Heart right ventricle (tissue), 16 donors: ENCODE measurements at regions of chr21 and their contacts with region 1.

Region 1: GRCh38 chr21:16323596-16323995 is 593.8 kb downstream of the USP25 start:
- DNase-seq: no peak
- ATAC-seq: no peak
- H3K4me3 ChIP-seq: no peak overlapping the region
- H3K27ac ChIP-seq: no peak overlapping the region
- H3K4me1 ChIP-seq: peaks cover 0 to 11% (median 0%) of the 10 kb centered on the region in 9 donors
- H3K27me3 ChIP-seq: no peaks in the 10 kb centered on the region
- CTCF ChIP-seq: no peak

Region 2: DNA sequence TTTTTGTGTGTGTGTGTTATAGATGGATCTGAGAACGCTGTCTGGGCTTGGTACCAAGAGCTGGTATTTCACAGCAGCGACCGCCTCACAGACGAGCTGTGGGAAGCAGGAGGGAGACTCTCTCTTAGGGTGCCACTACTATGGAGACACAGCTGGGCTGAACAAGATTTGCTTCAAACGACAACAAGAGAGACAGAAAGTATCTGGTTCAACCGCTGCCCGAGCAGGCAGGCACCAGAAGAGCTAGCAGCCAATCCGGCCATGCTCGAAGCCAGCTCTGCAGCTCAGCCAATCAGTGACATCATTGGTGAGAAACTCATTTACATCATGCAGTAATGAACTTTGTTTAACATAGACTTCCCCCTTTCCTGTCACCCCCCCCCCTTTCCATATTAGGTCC is 252.5 kb before region 1 on chr21:
- intact Hi-C with region 1: loop called in 1 of 10 experiments (anchors 1 kb)
- DNase-seq: no peak
- ATAC-seq: no peak
- H3K4me3 ChIP-seq: peak overlapping the region in 1 of 10 donors; percentile 5
- H3K27ac ChIP-seq: no peak overlapping the region
- H3K4me1 ChIP-seq: no peaks in the 10 kb centered on the region
- H3K27me3 ChIP-seq: no peaks in the 10 kb centered on the region
- CTCF ChIP-seq: no peak

Region 3: GRCh38 chr21:16082038-16082816 is 241.4 kb before region 1 on chr21:
- intact Hi-C with region 1: loop called in 4 of 10 experiments (anchors 2 to 5 kb)
- DNase-seq: no peak
- ATAC-seq: peak in 2 of 8 donors; percentile 33 to 38
- H3K4me3 ChIP-seq: peak overlapping the region in 5 of 10 donors; percentile 17 to 35 (median 33)
- H3K27ac ChIP-seq: peak overlapping the region in 1 of 10 donors; percentile 23
- H3K4me1 ChIP-seq: peaks cover 0 to 14% (median 4%) of the 10 kb centered on the region in 9 donors
- H3K27me3 ChIP-seq: no peaks in the 10 kb centered on the region
- CTCF ChIP-seq: peak; percentile 28 to 73 (median 54)

Region 4: DNA sequence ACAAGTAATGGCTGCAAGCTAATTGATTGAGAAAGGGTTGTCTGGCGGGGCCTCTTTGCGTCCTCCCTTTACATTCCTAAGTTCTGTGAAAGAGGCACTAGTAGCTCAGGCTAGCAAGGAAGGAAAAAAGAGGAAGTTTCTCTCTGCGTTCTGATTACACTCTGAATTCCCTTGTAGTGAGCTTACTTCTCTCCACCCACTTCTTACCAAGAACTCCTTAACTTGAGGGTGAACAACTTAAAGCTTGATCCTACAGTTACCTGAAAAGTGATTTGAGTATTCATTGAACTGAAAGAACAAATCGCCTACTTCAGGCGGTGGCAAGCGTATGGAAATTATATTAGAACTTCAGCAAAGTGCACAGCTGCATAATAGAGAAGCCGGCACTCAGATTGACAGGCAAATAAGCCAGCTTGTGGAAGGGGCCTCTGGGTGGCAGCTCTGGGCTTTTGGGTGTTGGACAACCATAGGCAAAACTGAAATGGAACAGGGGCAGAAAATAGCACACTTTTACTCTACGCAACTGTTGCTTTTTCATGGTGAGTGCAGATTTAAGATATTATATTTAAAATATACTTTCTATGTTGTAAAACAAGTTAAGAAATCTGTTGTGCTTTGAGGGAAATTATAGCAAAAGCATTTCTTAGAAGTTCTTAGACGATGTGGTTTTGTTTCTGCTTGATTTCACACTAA is 129.4 kb before region 1 on chr21:
- intact Hi-C with region 1: loop called in 2 of 10 experiments (anchors 5 to 10 kb)
- DNase-seq: peak; percentile 48 to 71
- ATAC-seq: peak; percentile 80 to 95 (median 92)
- H3K4me3 ChIP-seq: peak overlapping the region; percentile 9 to 59 (median 50)
- H3K27ac ChIP-seq: peak overlapping the region; percentile 47 to 86 (median 74)
- H3K4me1 ChIP-seq: peaks cover 0 to 35% (median 4%) of the 10 kb centered on the region in 9 donors
- H3K27me3 ChIP-seq: no peaks in the 10 kb centered on the region
- CTCF ChIP-seq: peak in 6 of 9 donors; percentile 28 to 65 (median 48)

Region 5: DNA sequence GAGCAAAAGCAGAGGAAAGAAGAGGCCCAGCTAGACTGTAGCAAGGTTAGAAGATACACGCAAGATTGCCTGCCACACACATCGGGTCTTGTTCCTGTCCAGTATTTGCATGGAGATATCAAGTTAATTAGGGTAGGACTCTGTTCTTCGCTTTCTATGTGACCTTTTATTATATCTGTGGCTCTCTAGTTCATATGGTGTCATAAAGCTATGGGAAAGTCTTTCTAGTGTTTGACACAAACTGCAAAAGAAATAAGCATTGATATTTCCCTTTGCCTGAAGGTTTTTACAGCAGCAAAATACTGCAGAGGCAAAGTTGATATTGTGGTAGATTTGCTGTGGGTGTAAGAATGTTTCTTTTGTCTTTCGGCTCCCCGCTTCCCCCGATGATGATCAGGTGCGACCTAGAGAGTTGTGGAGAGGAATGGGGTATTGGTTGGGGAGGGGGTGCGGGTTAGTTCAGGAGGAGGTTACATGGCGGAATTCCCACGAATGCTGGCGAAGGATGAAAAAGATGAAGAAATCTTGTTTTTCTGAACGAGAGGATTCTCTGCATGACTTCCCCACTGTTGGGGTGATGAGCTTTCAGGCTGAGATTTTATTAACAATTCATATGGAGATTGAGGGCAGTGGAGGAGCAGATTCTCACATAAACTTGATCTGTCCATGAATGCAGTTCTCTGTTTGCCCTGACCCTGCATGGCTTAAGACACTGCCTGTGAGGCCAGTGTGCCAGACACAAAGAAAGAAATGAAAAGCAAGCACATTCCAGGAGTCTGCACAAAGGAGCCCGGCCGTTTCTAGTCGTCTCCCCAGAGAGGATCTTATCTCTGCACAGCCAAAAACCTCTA is 43.6 kb before region 1 on chr21:
- intact Hi-C with region 1: loop called in 1 of 10 experiments (anchors 10 kb)
- DNase-seq: peak in 1 of 2 donors; percentile 12
- ATAC-seq: peak; percentile 63 to 87 (median 77)
- H3K4me3 ChIP-seq: peak overlapping the region in 8 of 10 donors; percentile 2 to 46 (median 25)
- H3K27ac ChIP-seq: peak overlapping the region; percentile 4 to 78 (median 44)
- H3K4me1 ChIP-seq: peaks cover 0 to 33% (median 13%) of the 10 kb centered on the region in 9 donors
- H3K27me3 ChIP-seq: no peaks in the 10 kb centered on the region
- CTCF ChIP-seq: no peak

Region 6: DNA sequence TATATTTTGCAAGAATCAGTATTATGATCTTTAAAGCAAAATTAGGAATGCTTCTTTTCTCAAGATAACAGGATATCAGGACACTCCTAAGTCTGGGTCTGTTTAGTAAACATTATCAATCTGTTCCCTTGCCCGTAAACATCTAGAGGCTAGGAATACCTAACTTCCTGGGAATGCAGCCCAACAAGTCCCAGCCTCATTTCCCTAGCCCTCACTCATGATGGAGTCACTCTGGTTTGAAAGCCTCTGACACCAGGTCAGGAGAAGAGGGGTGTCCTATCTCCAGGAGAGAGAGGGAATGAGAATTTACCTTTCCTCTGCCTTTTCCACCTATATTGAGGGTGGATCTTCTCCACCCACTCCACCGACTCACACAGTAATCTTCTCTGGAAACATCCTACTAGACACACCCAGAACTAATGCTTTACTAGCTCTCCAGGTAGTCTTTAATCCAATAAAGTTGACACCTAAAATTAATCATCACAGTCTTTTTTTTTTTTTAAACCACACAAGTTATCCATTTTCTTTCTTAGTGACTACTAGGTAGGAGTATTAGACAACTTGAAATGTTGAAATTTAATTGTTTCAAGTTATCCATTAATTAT is 65.4 kb after region 1 on chr21:
- intact Hi-C with region 1: no loop called
- DNase-seq: no peak
- ATAC-seq: no peak
- H3K4me3 ChIP-seq: no peak overlapping the region
- H3K27ac ChIP-seq: no peak overlapping the region
- H3K4me1 ChIP-seq: peaks cover 0 to 4% (median 0%) of the 10 kb centered on the region in 9 donors
- H3K27me3 ChIP-seq: no peaks in the 10 kb centered on the region
- CTCF ChIP-seq: no peak

Region 7: DNA sequence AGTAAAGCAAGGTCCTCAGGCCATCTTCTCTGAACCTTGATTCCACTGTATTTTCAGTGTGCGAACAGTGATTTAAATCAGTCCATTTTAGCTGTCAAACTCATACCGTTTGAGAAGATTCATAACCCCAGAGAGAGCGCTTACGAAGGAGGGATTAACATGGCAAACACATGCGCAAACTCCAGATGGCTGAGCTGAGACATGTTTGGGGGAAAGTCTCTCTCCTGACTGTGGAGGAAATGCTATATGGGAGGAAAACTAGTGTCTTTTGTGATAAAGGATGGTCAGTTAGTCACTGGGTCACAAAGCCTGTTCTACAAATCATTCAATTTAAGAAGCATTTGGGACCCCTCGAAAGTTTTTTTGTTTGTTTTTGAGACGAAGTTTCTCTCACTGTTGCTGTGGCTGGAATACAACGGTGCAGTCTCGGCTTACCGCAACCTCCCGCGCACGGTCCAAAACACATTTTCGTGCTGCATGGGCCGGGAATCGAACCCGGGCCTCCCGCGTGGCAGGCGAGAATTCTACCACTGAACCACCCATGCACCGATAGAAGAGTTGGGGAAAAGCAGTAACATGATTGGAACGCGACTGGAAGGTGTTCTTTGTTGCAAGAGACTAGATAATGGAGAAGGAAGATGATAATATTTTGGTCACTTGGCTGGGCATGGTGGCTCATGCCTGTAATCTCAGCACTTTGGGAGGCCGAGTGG is 1130.9 kb after region 1 on chr21:
- intact Hi-C with region 1: loop called in 1 of 10 experiments (anchors 10 kb)
- DNase-seq: no peak
- ATAC-seq: peak in 4 of 8 donors; percentile 24 to 91 (median 56)
- H3K4me3 ChIP-seq: no peak overlapping the region
- H3K27ac ChIP-seq: peak overlapping the region in 1 of 10 donors; percentile 7
- H3K4me1 ChIP-seq: peaks cover 0 to 12% (median 0%) of the 10 kb centered on the region in 9 donors
- H3K27me3 ChIP-seq: no peaks in the 10 kb centered on the region
- CTCF ChIP-seq: no peak